Naive thymus-derived CD4-positive, alpha-beta T cell (primary cell): ENCODE measurements at regions of chrX and their contacts with region 1.

Region 1: GRCh38 chrX:150772150-150772970 is 79.2 kb downstream of the MTMR1 start:
- DNase-seq: peak; percentile 34 to 80 (median 61)
- ATAC-seq: peak; percentile 86
- H3K4me3 ChIP-seq: no peak overlapping the region
- H3K4me3 Mint-ChIP-seq: no peak overlapping the region
- H3K27ac ChIP-seq: no peak overlapping the region
- H3K27ac Mint-ChIP-seq: peak overlapping the region in 1 of 9 donors; percentile 62
- H3K4me1 ChIP-seq: no peaks in the 10 kb centered on the region
- H3K4me1 Mint-ChIP-seq: peaks cover 0 to 3% (median 0%) of the 10 kb centered on the region in 7 donors
- H3K27me3 ChIP-seq: no peaks in the 10 kb centered on the region
- H3K27me3 Mint-ChIP-seq: no peaks in the 10 kb centered on the region

Region 2: DNA sequence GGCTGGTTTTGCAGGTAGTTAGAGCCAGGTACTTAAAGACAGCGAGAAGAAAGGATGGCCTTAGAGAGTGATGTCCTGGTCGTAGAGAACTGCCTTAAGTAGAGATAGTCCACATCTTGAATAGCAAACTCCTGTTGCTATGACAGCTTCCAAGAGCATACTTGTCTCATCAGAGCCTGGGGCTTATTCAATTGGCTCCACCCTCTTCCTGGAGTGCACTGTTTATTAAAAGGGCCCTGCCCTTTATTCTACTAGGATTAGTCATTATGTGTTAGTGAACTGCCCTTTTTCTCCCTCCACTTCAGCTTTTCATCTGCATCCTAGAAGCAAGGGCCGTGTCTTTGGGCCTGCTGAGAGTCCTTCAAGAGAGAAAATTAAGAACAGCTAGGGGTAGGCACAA is 739.6 kb before region 1 on chrX:
- CTCF ChIA-PET with region 1: no interaction called
- POLR2A ChIA-PET with region 1: no interaction called
- intact Hi-C with region 1: no loop called
- DNase-seq: no peak
- ATAC-seq: no peak
- H3K4me3 ChIP-seq: no peak overlapping the region
- H3K4me3 Mint-ChIP-seq: no peak overlapping the region
- H3K27ac ChIP-seq: no peak overlapping the region
- H3K27ac Mint-ChIP-seq: no peak overlapping the region
- H3K4me1 ChIP-seq: no peaks in the 10 kb centered on the region
- H3K4me1 Mint-ChIP-seq: peaks cover 1 to 14% (median 8%) of the 10 kb centered on the region in 7 donors
- H3K27me3 ChIP-seq: no peaks in the 10 kb centered on the region
- H3K27me3 Mint-ChIP-seq: peaks cover 0 to 16% (median 0%) of the 10 kb centered on the region in 5 donors

Region 3: DNA sequence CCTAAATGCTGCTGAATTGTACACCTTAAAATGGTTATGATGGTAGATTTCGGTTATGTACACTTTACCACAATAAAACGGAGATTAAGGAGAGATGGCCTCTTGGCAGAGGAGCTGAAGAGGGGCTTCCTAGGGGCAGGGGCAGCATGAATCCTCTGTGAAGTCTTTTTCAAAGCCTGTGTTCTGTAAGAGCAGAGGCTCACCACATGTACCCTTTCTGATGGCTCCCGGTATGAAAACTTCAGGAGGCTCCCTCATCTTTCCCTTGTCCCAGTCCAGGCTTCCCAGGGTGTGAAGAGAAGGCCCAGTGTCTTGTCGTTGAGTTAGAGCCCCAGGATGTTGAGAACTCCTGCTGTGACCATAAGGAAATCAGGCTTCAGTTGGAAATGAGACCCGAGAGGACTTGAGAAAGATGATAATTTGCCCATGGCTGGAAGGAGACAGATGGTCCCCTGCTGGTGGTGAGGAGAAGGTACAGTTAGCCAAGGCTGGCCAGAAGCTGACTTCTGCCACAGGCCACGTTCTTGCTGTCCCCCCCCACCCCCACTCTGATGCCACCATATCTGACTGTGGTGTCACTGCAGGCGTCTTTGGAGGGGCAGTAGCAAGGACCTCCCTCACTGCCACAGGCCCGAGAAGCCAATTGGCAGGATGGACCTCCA is 235.8 kb before region 1 on chrX:
- CTCF ChIA-PET with region 1: no interaction called
- POLR2A ChIA-PET with region 1: no interaction called
- intact Hi-C with region 1: no loop called
- DNase-seq: no peak
- ATAC-seq: no peak
- H3K4me3 ChIP-seq: no peak overlapping the region
- H3K4me3 Mint-ChIP-seq: no peak overlapping the region
- H3K27ac ChIP-seq: no peak overlapping the region
- H3K27ac Mint-ChIP-seq: no peak overlapping the region
- H3K4me1 ChIP-seq: no peaks in the 10 kb centered on the region
- H3K4me1 Mint-ChIP-seq: no peaks in the 10 kb centered on the region
- H3K27me3 ChIP-seq: no peaks in the 10 kb centered on the region
- H3K27me3 Mint-ChIP-seq: no peaks in the 10 kb centered on the region

Region 4: GRCh38 chrX:151004082-151004481 is 231.7 kb after region 1 on chrX:
- CTCF ChIA-PET with region 1: no interaction called
- POLR2A ChIA-PET with region 1: no interaction called
- intact Hi-C with region 1: loop called in 1 of 2 experiments (anchors 5 kb)
- DNase-seq: no peak
- ATAC-seq: no peak
- H3K4me3 ChIP-seq: no peak overlapping the region
- H3K4me3 Mint-ChIP-seq: no peak overlapping the region
- H3K27ac ChIP-seq: no peak overlapping the region
- H3K27ac Mint-ChIP-seq: no peak overlapping the region
- H3K4me1 ChIP-seq: no peaks in the 10 kb centered on the region
- H3K4me1 Mint-ChIP-seq: no peaks in the 10 kb centered on the region
- H3K27me3 ChIP-seq: no peaks in the 10 kb centered on the region
- H3K27me3 Mint-ChIP-seq: peaks cover 0 to 7% (median 4%) of the 10 kb centered on the region in 5 donors